ENCODE measurements at regions of chr4 and their contacts with region 1.

Region 1: DNA sequence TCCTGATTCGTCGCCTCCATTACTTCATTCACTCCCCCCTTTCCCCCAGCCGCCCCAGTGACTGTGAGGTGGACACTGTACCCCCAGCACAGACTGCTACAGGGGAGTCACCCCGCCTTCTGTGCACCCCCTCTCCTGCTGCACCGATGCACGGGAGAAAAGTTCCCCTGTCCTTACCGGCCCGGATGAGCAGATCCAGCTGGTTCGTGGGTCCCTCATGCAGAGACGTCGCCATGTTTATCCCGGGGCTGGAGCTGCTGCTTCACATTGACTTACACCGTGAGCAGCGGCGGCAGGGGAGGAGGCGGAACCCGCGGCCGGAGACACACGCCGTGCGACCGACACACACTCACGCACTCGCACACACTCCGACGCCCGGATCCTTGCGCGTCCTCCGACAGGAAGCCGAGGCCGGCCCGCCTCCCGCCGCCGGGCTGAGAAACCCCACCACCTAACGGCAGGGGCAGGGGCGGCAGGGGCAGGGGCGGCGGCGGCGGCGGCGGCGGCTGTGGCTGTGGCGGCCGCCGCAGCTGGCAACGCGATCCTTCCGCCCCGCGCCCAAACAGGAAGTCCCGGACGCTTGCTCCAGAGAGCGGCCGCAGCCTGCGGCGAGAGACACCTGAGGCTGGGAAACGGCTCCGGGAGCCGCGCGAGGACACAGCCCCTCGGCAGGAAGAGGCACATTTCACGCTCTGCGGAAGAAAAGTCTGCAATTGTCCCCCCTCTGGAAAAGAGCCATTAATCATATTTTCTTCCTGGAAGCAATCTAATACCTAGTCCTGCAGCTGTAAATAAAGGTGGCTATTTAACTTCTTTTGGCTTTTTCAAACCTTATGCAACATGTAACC is 68.6 kb downstream of the NOCT start:
- DNase-seq: peak; percentile 84
- ATAC-seq: peak; percentile 50
- H3K4me3 Mint-ChIP-seq: peak overlapping the region; percentile 91
- H3K27ac Mint-ChIP-seq: peak overlapping the region; percentile 96
- H3K4me1 Mint-ChIP-seq: peaks cover 21% of the 10 kb centered on the region
- H3K27me3 Mint-ChIP-seq: peaks cover 9% of the 10 kb centered on the region

Region 2: DNA sequence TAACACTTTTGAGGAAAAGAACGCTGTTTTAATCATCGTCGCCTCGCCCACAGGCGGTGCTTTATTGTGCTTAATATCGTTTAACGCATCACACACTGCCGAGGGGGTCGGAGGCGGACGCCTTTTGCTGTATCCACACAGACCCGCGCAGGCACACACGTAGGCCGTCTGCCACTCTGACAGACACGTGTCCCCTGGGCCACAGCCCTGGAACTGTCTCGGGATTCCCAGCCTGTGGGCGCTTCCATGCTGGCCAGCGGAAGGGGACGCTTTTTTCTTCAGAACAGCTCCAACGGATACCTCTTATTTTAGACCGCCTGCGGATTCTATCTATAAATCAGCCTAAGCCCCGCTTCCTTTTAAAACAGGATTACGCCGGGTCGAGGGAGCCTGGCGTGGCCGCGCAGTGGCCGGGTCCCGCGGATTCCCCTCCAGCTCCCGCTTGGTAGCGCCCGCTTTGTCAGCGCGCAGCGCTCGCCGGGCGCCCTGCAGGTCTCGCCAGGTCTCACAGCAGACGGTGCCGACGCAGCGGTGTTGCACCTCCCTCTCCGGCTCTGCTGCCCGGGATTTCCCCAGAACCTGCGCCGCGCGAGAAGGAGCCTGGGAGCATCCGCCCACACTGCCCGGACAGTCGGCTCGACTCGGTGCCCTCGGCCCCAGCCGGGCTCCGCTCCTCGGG is 68.8 kb before region 1 on chr4 and contains the start of gene NOCT:
- POLR2A ChIA-PET with region 1: interaction called, 11 read pairs
- DNase-seq: peak; percentile 90
- ATAC-seq: peak; percentile 97
- H3K4me3 Mint-ChIP-seq: peak within 1 kb of the TSS; percentile 91
- H3K27ac Mint-ChIP-seq: peak within 1 kb of the TSS; percentile 87
- H3K4me1 Mint-ChIP-seq: peaks cover 17% of the 10 kb centered on the region
- H3K27me3 Mint-ChIP-seq: no peaks in the 10 kb centered on the region
- total RNA-seq, gene NOCT: 4.7 to 5.9 TPM

Region 3: DNA sequence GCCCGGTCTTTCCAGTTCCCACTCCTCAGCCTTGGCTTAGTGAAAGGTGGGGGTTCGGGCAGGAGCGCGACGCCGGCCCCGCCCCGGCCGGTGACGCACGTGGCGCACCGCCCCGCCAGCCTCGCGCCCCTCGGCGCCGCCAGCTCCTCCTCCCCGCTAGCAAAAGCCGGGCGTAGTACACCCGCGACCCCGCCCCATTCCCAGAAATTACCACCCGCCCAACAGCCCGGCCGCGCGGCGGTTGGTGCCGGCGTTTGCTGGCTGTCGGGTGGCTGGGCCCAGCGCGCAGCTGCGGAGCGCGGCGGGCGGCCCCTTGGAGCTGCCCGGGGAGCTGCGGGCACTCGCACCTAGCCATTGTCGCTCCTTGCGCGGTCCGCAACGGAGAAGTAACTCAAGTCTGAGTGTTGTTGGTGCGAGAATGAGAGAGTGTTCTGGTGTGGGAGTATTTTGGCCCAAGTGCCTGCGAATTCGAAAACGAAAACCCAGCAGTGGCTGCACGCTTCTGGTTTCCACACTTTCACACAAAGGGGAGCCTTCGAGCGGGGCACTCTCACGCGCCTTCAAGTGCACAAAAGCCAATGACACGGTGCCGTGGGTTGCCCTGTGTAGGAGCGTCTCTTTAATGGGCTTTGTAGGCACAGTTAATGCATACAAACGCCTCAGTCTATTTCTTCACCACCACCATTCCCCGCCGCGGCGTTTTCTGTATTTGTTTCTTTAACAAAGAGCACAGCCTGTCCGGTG is 93.9 kb after region 1 on chr4:
- POLR2A ChIA-PET with region 1: interaction called, 23 read pairs
- DNase-seq: peak; percentile 94
- ATAC-seq: peak; percentile 77
- H3K4me3 Mint-ChIP-seq: peak overlapping the region; percentile 91
- H3K27ac Mint-ChIP-seq: peak overlapping the region; percentile 86
- H3K4me1 Mint-ChIP-seq: peaks cover 13% of the 10 kb centered on the region
- H3K27me3 Mint-ChIP-seq: peaks cover 31% of the 10 kb centered on the region

Region 4: DNA sequence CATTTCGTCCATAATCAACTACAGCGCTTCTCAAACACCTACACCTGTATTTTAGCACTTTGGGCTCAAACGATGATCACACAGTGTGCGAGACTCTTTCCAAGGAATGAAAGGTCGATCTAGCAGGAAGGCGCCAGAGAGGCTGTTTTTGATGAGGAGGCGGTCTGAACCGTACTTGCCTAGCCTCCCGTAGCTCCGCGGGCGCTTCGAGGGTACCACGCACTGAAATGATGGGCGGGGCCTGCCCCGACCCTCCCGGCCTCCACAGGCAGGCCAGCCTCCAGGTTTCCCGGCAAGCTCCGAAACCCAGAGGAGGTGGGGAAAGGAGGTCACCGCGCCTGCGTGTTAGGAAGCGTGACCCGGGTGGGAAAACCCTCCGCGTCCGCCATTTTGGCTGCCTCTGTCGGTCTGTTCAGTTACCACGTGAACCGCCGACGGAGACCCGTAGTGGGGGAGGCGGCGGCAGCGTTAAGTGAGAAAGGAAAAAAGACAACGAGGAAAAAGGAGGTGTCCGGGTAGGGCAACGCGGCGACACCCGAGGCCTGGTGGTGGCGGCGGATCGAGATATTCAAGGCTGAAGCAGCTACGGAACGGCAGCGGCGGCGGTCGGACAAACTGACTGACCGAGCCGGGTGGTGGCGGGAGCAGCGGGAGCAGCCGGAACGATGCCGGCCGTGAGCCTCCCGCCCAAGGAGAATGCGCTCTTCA is 217.1 kb after region 1 on chr4 and contains the start of gene NAA15:
- POLR2A ChIA-PET with region 1: interaction called, 18 read pairs
- DNase-seq: peak; percentile 95
- ATAC-seq: peak; percentile 90
- H3K4me3 Mint-ChIP-seq: peak within 1 kb of the TSS; percentile 93
- H3K27ac Mint-ChIP-seq: peak within 1 kb of the TSS; percentile 95
- H3K4me1 Mint-ChIP-seq: peaks cover 34% of the 10 kb centered on the region
- H3K27me3 Mint-ChIP-seq: no peaks in the 10 kb centered on the region
- total RNA-seq, gene NAA15: 42.1 to 50.3 TPM

Measured in activated naive CD8-positive, alpha-beta T cell treated with anti-CD3 and anti-CD28 coated beads, Interleukin-2, amount 10 ng/mL, durations not matched to agents 7 days and 5 days (primary cell).